Motor neuron (in vitro differentiated cells): ENCODE measurements at regions of chr9 and their contacts with region 1.

Region 1: DNA sequence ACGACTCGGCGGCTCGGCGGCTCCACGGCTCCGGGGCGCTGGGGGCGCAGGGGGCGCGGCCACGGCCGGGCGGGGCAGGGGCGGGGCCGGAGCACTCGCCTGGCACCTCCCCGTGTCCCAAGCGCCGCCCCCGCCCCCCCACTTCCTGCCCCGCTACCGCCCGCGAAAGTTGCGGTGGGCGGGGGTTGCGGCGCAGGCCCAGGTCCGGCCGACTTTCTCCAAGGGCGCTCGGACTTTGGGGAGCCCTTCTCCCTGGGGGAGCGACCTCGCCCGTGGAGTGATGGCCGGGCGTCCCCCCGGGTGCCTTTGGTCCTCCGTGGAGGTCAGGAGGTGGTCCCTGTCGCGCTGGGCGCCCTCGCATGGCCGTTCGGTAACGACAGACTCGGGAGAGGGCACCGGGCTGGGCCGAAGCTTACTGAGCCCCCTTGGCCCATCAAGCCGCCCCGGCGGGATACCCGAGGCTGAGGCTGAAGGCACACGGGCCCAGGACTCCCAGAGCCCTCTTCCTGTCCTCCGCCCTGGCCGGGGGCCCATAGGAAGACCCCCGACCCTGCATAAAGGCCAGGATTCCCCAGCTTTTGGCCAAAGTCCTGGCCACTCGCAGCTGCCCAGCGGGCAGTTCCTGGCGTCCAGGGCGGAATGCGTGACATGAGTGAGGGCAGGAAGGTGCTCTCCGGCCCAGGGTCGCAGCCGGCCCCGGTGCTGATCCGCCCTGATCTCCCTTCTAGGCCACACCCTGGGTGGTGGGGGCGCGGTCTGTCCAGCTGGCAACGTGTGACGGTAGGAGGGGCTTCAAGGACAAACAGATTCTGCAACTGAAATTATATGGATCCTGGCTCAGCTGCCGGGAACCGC is 883 bp upstream of the VAV2 start:
- ATAC-seq: peak; percentile 35 to 65 (median 46)
- H3K4me3 ChIP-seq: peak overlapping the region; percentile 60 to 94 (median 80)
- H3K27ac ChIP-seq: peak overlapping the region; percentile 85 to 90
- H3K4me1 ChIP-seq: peaks cover 19 to 20% of the 10 kb centered on the region in 2 donors

Region 2: GRCh38 chr9:133782157-133783130 is 210.6 kb before region 1 on chr9:
- in situ Hi-C with region 1: loop called in 6 of 9 experiments (anchors 10 to 25 kb)
- ATAC-seq: peak; percentile 55 to 83 (median 62)
- H3K4me3 ChIP-seq: no peak overlapping the region
- H3K27ac ChIP-seq: no peak overlapping the region
- H3K4me1 ChIP-seq: peaks cover 2 to 10% of the 10 kb centered on the region in 2 donors

Region 3: DNA sequence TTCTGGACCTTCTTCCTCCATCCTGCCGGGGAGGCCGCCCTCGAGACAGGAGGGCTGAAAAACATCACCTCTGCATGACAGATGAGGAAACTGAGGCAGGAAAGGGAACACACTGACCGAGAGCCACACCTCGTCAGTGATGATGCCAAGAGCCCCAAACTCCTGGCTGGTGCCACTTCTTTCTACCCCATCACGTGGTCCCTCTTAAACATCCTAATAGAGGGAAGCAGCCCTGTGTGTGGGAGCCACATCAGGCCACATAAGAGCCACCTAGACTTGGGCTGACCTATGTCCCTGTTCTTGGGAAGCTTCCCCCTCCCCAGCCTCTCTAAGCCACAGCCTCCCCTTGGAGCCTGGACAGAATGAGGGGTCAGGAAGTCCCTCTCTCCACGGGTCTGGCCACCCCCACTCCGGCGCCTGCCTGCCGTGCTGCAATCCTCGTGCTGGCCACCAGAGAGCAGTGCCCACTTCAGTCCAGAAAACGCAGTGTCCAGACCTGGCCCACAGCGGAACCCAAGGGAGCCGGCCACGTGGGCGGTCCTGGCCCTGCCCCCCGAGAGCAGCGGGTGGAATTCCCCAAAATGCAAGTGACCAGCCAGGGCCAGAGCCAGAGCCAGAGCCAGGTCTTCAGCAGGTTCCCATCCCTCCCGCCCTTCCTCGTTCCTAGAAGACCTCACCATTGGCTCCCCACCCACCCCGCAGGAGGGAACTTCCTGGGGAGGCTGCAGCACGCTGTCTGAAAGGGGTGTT is 200.1 kb before region 1 on chr9:
- in situ Hi-C with region 1: loop called in 8 of 9 experiments (anchors 10 to 25 kb)
- ATAC-seq: peak; percentile 70 to 94 (median 76)
- H3K4me3 ChIP-seq: peak overlapping the region in 1 of 5 donors; percentile 7
- H3K27ac ChIP-seq: no peak overlapping the region
- H3K4me1 ChIP-seq: peaks cover 10 to 19% of the 10 kb centered on the region in 2 donors

Region 4: DNA sequence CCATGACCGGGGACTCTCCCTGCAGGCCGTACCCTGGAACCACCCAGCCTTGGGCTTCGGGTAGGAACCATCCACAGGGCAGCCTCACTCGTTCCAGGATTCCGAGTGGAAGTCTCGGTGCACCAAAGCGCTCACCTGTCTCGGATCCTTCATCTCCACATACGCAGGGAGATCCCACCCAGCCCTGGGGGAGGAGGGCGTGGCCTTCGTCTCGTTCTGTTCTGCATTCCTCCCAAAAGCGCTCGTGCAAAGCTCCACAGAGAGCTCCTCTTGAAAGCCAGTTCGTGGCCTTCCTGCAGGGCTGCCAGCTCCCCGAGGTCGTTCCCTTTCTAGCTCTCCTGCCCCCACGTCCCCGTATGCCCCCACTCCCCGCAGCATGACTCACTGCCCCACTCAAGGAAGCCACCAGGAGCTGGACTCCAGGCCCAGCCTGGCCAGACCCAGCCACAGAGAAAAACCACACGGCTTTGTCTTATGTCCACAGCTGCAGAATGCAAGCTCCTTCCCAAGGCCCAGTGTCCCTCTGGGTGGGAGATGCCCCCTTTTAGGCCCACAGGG is 189.9 kb before region 1 on chr9:
- in situ Hi-C with region 1: loop called in 5 of 9 experiments (anchors 10 to 25 kb)
- ATAC-seq: no peak
- H3K4me3 ChIP-seq: no peak overlapping the region
- H3K27ac ChIP-seq: no peak overlapping the region
- H3K4me1 ChIP-seq: no peaks in the 10 kb centered on the region

Region 5: DNA sequence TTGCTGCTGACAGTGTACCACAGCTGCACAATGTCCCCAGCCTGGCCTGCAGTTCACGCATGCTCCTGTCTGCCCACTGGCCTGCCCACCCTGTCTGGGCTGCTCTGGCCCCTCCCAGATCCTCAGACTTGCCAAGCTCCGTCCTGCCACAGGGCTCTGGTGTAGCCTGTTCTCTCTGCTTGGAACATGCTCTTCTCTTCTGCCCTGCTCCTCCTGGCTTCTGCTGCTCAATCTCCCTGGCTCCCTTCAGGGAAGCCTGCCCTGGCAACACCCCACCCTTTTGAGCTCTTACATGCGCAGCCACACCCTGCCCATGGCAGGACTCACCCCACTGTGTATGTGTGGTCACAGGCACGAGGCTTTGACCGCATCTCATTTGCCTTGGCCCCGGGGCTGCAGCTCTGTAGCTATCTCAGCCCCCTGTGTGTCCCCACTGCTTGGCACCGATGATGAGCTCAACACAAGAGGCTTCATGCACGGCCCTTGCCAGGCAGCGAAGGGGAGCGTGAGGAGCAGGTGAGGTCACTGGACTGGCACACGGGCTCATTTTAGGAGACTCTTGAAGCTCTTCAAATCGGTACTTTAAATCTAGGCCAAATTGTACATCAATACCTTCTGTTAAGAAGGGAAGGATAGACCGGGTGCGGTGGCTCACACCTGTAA is 95.2 kb after region 1 on chr9:
- in situ Hi-C with region 1: no loop called
- ATAC-seq: peak in 5 of 8 experiments; percentile 15 to 99 (median 99)
- H3K4me3 ChIP-seq: no peak overlapping the region
- H3K27ac ChIP-seq: no peak overlapping the region
- H3K4me1 ChIP-seq: no peaks in the 10 kb centered on the region